Activated T-helper 1 cell treated with anti-CD3 and anti-CD28 coated beads, Interleukin-12 subunit alpha, Interleukin-12 subunit beta, Interleukin-2, Interleukin-4 antibody, amounts not matched to agents 30 ng/mL and 10 ng/mL and 1 ng/mL, durations not matched to agents 14 hours and 24 hours and 36 hours (primary cell): ENCODE measurements at regions of chr11 and their contacts with region 1.

Region 1: DNA sequence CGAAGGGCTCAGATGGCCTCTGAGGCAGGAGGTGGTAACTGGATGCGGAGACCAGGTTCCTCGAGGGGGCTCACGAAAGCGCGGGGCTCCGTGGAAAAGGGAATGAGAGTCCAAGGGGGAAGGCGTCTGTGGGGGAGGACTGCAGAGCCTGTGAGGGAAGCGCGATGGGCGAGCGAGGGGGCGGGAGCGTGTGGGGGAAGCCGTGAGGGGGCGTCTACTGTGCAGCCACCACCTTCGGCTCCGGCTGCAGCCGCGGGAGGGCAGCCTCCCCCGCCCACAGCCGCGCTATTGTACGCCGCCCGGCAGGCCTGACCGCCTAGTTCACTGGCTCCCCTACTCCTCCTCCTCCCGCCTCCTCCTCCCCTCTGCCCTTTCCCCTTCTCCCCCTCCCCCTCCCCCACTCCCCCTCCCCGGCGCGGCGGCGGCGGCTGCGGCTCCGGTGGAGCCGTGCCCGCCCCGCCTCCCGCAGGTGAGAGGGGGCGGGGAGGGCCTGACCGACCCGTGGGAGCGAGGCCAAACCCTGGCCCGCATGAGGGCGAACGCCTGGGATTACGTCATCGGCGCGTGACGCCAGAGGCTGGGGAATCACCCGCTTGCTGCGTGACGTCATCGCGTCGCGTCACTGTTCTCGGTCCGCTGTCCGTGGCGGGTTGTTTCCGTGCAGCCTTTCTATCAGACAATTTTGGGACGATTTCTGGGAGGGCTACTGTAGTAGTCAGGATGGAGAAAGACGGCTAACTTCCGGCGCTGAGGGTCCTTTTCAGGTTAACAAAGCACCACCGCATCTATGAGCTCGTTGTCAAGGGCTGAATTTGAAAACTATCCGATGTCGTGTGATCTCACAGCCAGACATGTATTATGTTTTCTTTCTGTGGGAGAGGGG is at the start of gene PAK1:
- DNase-seq: peak; percentile 81
- H3K4me3 Mint-ChIP-seq: peak within 1 kb of the TSS; percentile 79
- H3K27ac Mint-ChIP-seq: peak within 1 kb of the TSS; percentile 74
- H3K4me1 Mint-ChIP-seq: peaks cover 27% of the 10 kb centered on the region
- H3K27me3 Mint-ChIP-seq: peaks cover 25% of the 10 kb centered on the region
- total RNA-seq, gene PAK1: 33.1 and 38.4 TPM in 2 replicates

Region 2: GRCh38 chr11:77589521-77590193 is 115.6 kb after region 1 on chr11 and contains the start of gene AQP11:
- intact Hi-C with region 1: loop called (anchors 10 kb)
- DNase-seq: peak; percentile 58
- H3K4me3 Mint-ChIP-seq: peak within 1 kb of the TSS; percentile 88
- H3K27ac Mint-ChIP-seq: peak within 1 kb of the TSS; percentile 75
- H3K4me1 Mint-ChIP-seq: peaks cover 17% of the 10 kb centered on the region
- H3K27me3 Mint-ChIP-seq: peaks cover 7% of the 10 kb centered on the region
- total RNA-seq, gene AQP11: 0.18 and 0.59 TPM in 2 replicates